HEK293 (cell line): ENCODE measurements at regions of chr18 and their contacts with region 1.

Region 1: DNA sequence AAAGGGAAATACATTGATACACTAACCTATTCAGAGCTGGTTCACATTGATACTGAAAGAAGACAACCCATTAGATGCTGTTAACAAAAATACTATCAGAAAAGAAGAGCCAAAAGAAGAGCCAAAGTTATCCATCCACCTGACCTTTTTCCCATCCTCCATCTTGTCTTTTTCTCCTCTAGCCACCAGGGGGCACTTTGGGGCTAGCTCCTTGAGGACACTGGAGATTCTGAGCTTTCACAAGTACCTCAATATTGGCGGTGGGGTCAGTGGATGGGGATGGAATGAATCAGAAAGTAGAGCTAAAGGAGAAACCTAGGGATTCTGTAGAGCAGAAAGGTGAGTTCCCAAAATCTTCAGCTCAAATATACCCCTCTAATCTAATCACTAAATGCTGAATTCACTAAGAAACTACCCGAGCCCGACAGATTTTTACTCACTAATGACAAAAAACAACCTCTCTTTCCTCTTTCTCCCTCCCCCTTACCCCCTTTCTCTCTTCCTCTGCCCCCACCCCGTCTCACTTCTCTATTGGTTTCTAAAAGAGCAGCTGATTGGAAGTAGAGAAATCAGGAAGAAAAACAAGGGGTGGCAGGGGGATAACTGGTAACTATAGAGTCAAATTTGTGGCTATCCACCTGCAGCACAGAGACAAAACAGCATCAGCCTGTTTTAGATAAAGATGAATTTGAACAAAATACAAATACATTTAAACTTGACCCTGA is 203.3 kb downstream of the TCF4 start:
- H3K4me3 ChIP-seq: no peak overlapping the region
- H3K27ac ChIP-seq: no peak overlapping the region
- H3K4me1 ChIP-seq: peaks cover 5% of the 10 kb centered on the region; the same call in 1 of the 2 replicates
- CTCF ChIP-seq: no peak

Region 2: GRCh38 chr18:54860941-54861340 is 523.8 kb before region 1 on chr18:
- CTCF ChIA-PET with region 1: no interaction called
- POLR2A ChIA-PET with region 1: no interaction called
- H3K4me3 ChIP-seq: no peak overlapping the region
- H3K27ac ChIP-seq: no peak overlapping the region
- H3K4me1 ChIP-seq: no peaks in the 10 kb centered on the region
- CTCF ChIP-seq: no peak

Region 3: GRCh38 chr18:55322178-55322735 is 62.5 kb before region 1 on chr18:
- CTCF ChIA-PET with region 1: no interaction called
- POLR2A ChIA-PET with region 1: no interaction called
- H3K4me3 ChIP-seq: peak overlapping the region; percentile 33
- H3K27ac ChIP-seq: peak overlapping the region; percentile 97
- H3K4me1 ChIP-seq: peaks cover 47% of the 10 kb centered on the region
- CTCF ChIP-seq: peak; percentile 68

Region 4: GRCh38 chr18:55372209-55372608 is 12.5 kb before region 1 on chr18:
- CTCF ChIA-PET with region 1: interaction called, 11 read pairs
- POLR2A ChIA-PET with region 1: no interaction called
- H3K4me3 ChIP-seq: no peak overlapping the region
- H3K27ac ChIP-seq: no peak overlapping the region
- H3K4me1 ChIP-seq: no peaks in the 10 kb centered on the region
- CTCF ChIP-seq: no peak

Region 5: DNA sequence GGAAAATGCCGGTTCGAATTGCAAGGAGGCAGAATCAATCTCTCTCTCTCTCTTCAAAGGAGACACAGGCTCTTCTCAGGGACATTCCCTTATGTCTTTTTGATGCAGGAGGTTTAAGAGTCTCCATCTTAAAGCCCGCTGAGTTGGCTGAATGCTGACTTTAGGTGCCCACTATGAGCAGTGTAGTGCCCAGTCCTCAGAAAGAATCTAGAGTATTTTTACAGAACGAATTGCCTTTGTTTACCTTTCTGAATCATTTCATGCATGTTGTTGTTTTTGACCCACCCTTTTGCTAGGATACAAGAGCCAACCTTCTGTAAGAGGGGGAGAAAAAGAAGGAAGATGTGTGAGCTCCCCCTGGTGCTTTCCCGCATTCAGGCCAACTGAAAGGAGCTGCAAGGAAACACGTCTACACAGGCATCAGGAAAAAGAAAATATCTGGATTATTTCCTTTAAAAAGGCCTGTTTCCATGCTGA is 396.8 kb after region 1 on chr18:
- CTCF ChIA-PET with region 1: interaction called, 13 read pairs
- POLR2A ChIA-PET with region 1: no interaction called
- H3K4me3 ChIP-seq: no peak overlapping the region
- H3K27ac ChIP-seq: no peak overlapping the region
- H3K4me1 ChIP-seq: peaks cover 6% of the 10 kb centered on the region; the same call in 1 of the 2 replicates
- CTCF ChIP-seq: peak; percentile 72; the same call in 1 of the 2 replicates